ENCODE measurements at regions of chr4 and their contacts with region 1.

Region 1: DNA sequence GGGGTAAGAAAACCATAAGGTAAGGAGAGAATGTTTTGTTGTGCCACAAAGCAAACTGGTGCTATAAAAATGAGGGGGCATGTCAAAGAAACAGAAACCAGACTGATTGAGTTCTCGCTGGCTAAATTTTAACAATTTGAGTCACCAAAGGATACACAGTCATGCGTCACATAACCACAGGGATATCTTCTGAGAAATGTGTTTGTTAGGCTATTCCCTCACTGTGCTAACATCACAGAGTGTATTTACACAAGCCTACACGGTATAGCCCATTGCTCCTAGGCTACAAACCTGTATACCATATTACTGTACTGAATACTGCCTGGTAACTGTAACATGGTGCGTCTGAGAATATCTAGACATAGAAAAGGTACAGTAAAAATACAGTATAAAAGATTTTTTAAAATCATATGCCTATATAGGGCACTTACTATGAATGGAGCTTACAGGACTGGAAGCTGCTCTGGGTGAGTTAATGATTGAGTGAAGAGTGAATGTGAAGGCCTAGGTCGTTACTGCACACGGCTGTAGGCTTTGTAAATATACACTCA is 50.1 kb downstream of the FBXW7 start:
- DNase-seq: peak; percentile 44
- H3K4me3 Mint-ChIP-seq: peak overlapping the region; percentile 13
- H3K27ac Mint-ChIP-seq: peak overlapping the region; percentile 33
- H3K4me1 Mint-ChIP-seq: peaks cover 37% of the 10 kb centered on the region
- H3K27me3 Mint-ChIP-seq: no peaks in the 10 kb centered on the region

Region 2: GRCh38 chr4:152063885-152064240 is 421.9 kb before region 1 on chr4:
- intact Hi-C with region 1: no loop called
- DNase-seq: peak; percentile 45
- H3K4me3 Mint-ChIP-seq: no peak overlapping the region
- H3K27ac Mint-ChIP-seq: no peak overlapping the region
- H3K4me1 Mint-ChIP-seq: peaks cover 25% of the 10 kb centered on the region
- H3K27me3 Mint-ChIP-seq: peaks cover 9% of the 10 kb centered on the region

Region 3: GRCh38 chr4:152408514-152409327 is 77.1 kb before region 1 on chr4:
- intact Hi-C with region 1: loop called (anchors 5 kb)
- DNase-seq: no peak
- H3K4me3 Mint-ChIP-seq: no peak overlapping the region
- H3K27ac Mint-ChIP-seq: no peak overlapping the region
- H3K4me1 Mint-ChIP-seq: peaks cover 9% of the 10 kb centered on the region
- H3K27me3 Mint-ChIP-seq: no peaks in the 10 kb centered on the region

Region 4: DNA sequence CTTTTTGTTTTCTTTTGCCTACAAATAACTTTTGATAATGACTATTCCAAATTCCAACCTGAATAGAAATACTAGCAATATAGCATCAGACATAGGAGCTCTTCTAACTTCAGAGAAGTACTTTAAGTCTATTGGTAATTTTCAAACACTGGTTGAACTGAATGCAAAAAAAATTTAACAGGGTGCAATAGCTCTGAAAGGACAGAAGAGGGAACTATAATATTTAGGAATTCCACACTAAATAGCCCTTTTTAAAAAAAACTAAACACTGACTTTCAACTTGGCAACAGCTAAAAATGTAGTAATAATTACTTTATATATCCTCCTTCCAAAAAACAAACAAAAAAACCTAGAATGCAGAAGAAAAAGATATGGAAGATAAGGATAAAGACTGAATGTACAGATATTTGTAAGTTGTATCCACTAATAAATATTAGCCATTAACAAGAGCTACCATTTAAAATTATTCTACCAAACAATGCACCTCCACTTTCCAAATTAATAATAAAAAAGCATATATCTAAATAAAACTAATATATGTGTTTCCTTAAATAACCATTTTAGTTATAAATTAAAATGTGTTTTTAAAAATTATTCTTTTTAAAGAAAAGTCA is 31.3 kb before region 1 on chr4:
- intact Hi-C with region 1: loop called (anchors 1 kb)
- DNase-seq: no peak
- H3K4me3 Mint-ChIP-seq: no peak overlapping the region
- H3K27ac Mint-ChIP-seq: no peak overlapping the region
- H3K4me1 Mint-ChIP-seq: peaks cover 27% of the 10 kb centered on the region
- H3K27me3 Mint-ChIP-seq: no peaks in the 10 kb centered on the region

Region 5: GRCh38 chr4:152464030-152464823 is 21.6 kb before region 1 on chr4:
- intact Hi-C with region 1: loop called (anchors 1 kb)
- DNase-seq: no peak
- H3K4me3 Mint-ChIP-seq: peak overlapping the region; percentile 34
- H3K27ac Mint-ChIP-seq: peak overlapping the region; percentile 24
- H3K4me1 Mint-ChIP-seq: peaks cover 48% of the 10 kb centered on the region
- H3K27me3 Mint-ChIP-seq: no peaks in the 10 kb centered on the region

Region 6: DNA sequence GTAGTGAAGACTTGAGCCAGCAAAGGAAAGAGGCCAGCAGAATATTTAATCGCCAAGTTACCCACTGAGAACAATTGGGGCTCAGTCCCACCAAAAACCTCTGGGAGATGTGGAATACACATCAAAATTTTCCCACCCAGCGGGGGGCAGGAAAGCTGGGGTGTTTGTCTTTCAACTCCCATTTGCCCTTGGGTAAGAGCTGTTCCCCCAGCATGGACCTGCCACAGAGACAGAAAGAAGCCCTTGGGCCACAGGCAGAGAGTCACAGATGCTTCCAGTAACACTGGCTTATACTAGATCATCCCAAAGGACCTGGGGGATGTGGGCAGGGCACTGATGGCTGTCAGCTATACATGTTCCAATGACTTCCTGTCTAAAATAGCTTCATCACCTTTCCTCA is 68.9 kb after region 1 on chr4:
- intact Hi-C with region 1: loop called (anchors 1 kb)
- DNase-seq: no peak
- H3K4me3 Mint-ChIP-seq: no peak overlapping the region
- H3K27ac Mint-ChIP-seq: peak overlapping the region; percentile 96
- H3K4me1 Mint-ChIP-seq: peaks cover 36% of the 10 kb centered on the region
- H3K27me3 Mint-ChIP-seq: no peaks in the 10 kb centered on the region